Ascending aorta (tissue), 2 donors: ENCODE measurements at regions of chr4 and their contacts with region 1.

Region 1: GRCh38 chr4:138035781-138036258 is 206.3 kb downstream of the SLC7A11 start:
- DNase-seq: peak in 1 of 2 donors; percentile 59
- H3K4me3 ChIP-seq: no peak overlapping the region
- H3K27ac ChIP-seq: no peak overlapping the region
- H3K4me1 ChIP-seq: no peaks in the 10 kb centered on the region
- H3K27me3 ChIP-seq: no peaks in the 10 kb centered on the region
- CTCF ChIP-seq: peak; percentile 45 to 70 (median 50)

Region 2: DNA sequence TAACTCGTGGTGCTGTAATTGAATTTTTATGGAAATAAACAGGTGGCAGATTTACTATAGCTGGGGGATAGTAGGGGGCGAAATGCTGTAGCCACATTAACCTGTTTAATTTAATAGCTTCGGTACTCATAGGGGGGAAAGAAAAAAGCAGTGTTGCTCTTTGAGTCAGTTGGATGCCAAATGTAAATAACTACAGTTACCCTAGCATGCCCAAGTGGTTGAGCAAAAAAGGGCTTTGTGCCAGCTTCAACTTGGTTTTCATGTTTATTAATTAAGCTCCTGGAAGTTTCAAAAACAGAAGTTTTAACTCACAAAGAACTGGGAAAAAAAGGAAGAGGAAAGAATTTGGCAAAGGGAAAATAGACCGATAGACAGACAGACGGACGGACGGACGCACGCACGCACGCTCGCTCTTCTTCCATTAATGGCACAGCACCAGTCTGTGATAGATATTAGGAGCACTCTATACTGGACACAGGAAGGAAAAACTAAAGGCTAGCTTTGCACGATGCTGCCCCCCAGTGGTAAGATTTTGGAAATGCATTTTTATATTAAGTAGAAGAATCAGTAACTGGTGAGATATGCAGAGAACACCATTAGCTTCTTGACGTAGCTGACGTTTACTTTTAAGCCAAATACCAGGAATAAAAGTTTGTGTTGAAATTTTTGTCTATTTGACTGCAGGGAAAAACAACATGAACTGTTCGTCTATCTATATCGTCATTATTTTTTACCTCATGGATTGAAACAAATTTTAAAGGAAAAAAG is 54.5 kb after region 1 on chr4:
- intact Hi-C with region 1: loop called (anchors 1 kb)
- DNase-seq: peak in 1 of 2 donors; percentile 68
- H3K4me3 ChIP-seq: peak overlapping the region; percentile 39 to 48
- H3K27ac ChIP-seq: no peak overlapping the region
- H3K4me1 ChIP-seq: peaks cover 2% of the 10 kb centered on the region in 2 donors
- H3K27me3 ChIP-seq: no peaks in the 10 kb centered on the region
- CTCF ChIP-seq: peak; percentile 50 to 79 (median 73)

Region 3: GRCh38 chr4:138190452-138190858 is 154.6 kb after region 1 on chr4:
- intact Hi-C with region 1: no loop called
- DNase-seq: no peak
- H3K4me3 ChIP-seq: no peak overlapping the region
- H3K27ac ChIP-seq: no peak overlapping the region
- H3K4me1 ChIP-seq: no peaks in the 10 kb centered on the region
- H3K27me3 ChIP-seq: no peaks in the 10 kb centered on the region
- CTCF ChIP-seq: no peak